AG04449 (cell line): ENCODE measurements at regions of chr7 and their contacts with region 1.

Region 1: DNA sequence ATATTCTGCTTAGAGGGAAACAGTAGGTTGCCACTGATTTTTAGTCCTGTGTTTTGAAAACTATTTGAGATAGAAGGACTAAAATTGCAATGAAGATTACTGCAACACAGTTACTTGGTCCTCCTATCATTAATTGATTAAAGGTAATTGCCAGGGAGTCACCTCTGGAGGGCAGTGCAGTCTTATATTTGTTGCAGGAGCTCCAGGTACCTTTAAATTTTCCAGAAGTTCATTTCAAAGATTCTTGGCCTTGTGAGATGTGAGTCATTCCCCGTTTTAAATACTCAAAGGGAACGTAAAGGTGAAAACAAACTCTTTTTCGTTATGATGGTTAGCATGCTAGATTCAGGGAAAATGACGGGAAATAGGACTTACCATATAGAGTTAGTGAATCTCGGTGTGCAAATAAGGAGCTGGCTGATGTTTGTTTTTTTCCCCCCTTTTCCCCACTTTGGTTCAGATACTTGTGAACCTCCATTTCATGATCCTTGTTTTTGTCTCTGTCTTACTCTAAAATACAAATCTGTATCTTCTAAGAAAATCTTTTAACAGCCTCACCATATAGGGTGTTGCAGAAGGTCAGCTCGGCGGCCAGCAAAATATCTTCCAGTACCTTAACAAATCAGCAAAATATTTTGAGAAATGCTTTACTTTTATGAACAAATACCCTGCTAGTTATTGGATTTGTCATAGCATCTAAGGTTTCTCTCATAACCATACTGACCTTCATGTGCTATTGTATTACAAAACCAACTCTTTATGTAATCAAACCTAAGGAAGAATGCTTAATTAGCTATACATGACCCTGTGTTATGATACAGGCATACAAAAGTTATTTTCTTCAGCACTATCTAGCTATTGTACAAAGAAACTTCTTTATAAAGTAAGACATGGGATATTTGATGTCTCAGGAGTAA is 143.0 kb upstream of the HDAC9 start:
- DNase-seq: peak; percentile 23
- H3K4me3 ChIP-seq: no peak overlapping the region
- CTCF ChIP-seq: peak; percentile 53

Region 2: DNA sequence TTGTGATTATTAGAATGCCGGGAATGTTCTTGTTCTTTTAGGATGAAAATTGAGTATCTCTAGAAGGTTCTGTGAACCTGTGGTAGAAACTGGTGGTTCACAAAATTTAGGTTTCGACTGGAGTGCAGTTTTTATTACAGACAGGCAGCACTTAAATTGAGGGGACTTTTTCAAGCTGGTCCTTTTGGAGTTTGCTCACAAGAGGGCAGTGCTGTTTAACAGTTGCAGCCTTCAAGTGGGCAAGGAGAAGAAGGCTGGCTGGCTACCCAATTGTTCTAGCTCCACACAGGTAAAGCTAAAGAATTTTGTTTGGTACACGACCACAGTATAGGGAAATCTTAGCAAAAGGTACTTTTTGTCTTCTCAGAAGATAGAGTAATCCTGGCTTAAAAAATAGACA is 645.9 kb before region 1 on chr7:
- CTCF ChIA-PET with region 1: interaction called, 87 read pairs
- POLR2A ChIA-PET with region 1: no interaction called
- DNase-seq: peak; percentile 16
- H3K4me3 ChIP-seq: no peak overlapping the region
- CTCF ChIP-seq: peak; percentile 69

Region 3: DNA sequence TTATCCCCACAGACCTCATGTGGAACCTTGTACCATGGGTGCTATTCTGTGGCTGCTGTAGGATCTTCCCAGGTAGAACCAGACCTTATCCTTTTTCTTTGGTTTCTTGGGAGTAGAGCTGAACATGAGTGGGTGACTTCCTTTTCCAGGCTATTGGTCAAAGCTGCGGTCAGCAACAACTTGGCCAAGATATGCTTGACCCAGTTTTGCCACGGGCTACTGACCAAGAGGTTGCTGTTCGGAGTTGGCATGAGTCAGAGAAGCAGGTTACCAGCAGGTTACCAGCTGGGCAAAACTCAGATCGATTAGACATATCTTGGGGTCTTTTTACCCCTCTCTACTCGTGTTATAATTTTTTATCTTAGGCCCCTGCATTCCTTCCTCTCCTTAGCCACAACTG is 106.2 kb after region 1 on chr7:
- CTCF ChIA-PET with region 1: no interaction called
- POLR2A ChIA-PET with region 1: no interaction called
- DNase-seq: no peak
- H3K4me3 ChIP-seq: no peak overlapping the region
- CTCF ChIP-seq: no peak

Region 4: DNA sequence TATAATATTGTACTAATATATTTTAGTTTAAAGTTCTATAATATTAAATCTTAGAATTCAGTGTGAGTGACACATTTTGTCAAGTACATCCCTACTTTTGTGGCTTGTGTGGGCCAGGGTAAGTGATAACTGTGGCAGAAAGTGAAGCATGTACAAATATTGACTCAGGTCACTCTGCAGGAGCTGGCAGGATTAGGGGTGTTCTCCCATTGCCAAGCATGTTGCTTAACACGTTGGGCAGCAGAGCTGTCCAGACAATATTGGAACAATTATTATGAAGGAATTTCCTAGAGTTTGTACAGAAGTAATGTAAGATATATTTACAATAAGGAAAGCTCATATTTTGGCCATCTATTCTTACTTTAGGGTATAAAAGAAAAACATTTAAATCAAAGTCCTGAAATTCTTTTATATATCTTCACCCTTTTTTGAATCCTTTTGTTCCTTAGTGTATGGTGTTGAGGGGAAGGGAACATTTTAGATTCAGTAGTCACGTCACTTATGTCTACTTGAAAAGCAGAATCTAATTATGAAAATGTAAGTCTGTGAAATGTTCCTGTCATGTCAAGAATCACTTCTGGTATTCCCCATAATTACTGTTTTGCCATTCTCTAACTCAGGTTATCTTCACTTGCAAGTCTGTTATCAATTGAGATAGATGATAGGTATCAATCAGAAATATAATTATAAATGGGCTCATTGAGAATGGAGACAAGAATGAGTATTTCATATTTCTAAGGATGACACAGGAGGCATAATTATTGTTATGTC is 147.0 kb after region 1 on chr7:
- CTCF ChIA-PET with region 1: interaction called, 12 read pairs
- POLR2A ChIA-PET with region 1: no interaction called
- DNase-seq: no peak
- H3K4me3 ChIP-seq: no peak overlapping the region
- CTCF ChIP-seq: no peak

Region 5: DNA sequence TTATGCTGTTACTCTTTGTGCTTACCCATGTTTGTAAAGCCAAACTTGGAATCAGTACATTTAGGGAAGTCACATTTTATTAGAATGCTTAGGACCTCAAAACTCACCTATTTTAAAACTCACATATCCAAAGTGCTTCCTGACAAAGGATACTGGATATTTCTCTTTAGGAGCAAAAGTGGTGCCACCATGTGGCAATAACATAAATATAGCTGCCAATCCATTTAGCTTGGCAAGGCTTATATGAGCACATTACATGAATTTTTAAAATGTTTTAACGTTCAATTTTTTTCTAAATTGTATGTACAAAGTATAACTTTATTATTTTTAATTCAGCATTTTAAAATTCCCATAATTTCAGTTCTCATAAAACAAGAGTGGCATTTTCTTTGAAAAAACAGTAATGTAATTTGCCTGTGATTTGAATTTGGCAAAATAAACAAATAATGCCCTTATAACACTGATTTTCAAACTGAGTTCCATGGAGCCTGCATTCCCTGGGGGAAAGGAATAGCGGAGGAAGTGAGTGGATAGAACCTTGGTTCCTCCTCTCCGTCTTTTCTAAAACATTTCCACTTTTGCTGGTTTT is 218.4 kb after region 1 on chr7:
- CTCF ChIA-PET with region 1: interaction called, 382 read pairs
- POLR2A ChIA-PET with region 1: no interaction called
- DNase-seq: no peak
- H3K4me3 ChIP-seq: no peak overlapping the region
- CTCF ChIP-seq: peak; percentile 19

Region 6: DNA sequence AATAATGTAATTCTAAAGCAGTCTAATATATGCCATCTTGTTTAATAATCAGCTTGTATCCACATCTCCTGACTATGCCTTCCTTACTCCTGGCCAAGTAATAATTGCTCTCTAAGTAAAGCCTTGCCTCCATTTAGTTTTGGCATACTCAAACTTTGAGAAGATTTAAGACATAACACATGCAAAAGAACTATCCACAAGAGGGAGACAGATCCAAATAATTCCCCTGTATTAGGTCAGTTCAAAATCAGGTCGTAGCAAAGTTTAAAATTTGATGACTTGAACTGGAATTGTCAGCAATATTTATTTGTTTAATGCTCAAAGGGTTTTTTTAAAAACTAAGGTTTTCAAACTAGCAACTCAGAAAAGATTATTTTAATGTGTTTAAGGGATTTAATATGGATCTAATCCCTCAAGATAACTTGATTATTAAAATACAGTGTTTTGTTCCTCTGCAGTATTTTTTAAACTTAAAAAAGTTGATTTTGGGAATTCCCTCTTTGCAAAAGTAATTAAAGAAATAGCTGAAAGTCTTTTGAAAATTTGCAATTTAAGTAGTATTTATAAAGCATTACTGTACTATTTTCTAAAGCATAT is 238.2 kb after region 1 on chr7:
- CTCF ChIA-PET with region 1: interaction called, 96 read pairs
- POLR2A ChIA-PET with region 1: interaction called, 3 read pairs
- DNase-seq: peak; percentile 19
- H3K4me3 ChIP-seq: no peak overlapping the region
- CTCF ChIP-seq: peak; percentile 49

Region 7: DNA sequence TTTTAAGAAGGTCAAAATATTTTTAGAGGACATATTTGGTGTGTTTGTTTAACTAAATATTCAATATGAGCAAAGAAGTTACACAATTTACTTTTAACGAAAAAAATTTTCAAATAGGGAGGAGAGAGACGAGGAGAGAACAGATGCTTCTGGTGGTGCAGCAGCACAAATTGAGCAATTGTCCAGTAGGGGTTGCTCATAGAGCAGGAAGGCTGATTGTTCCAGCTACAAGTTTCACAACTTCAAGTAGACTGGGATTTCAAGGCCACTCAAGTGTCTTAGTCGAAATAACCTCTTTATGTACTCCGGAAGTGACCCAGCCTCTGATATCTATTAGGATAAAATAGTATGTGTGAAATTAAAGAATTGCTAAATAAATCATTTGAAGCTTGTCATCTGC is 340.8 kb after region 1 on chr7:
- CTCF ChIA-PET with region 1: interaction called, 15 read pairs
- POLR2A ChIA-PET with region 1: no interaction called
- DNase-seq: peak; percentile 77
- H3K4me3 ChIP-seq: no peak overlapping the region
- CTCF ChIP-seq: peak; percentile 71

Region 8: GRCh38 chr7:19161671-19162070 is 809.1 kb after region 1 on chr7:
- CTCF ChIA-PET with region 1: no interaction called
- POLR2A ChIA-PET with region 1: no interaction called
- DNase-seq: no peak
- H3K4me3 ChIP-seq: no peak overlapping the region
- CTCF ChIP-seq: no peak